ENCODE measurements at regions of chr10 and their contacts with region 1.

Region 1: DNA sequence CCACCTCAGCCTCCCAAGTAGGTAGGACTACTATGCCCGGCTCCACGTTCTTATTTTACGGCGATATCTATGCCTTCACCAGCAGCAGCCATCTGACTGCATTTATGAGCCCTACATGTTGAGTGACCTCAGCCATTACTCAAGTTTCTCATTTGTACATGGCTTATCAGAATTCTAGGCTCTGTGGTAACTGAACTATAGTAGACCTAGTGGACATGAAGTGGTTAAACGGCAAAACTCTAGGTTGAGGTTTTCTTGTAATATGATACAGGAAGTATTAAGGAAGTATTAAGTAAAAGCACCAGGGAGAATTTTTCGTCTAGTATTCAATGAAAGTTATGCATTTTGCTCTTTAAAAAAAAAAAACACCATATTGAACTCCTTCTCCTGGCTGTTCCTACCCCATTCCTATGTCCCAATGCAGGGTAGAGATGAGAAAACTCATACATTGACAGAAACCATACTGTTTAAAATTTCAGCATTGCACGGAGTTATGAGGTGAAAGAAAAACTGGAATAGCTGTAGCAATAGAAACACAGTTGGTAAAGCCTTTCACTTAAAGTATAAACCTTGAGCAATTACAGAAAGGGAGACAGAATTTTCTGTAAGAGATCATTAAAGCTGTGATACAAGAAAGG is 39.8 kb upstream of the EPC1 start:
- DNase-seq: no peak
- ATAC-seq: no peak

Region 2: GRCh38 chr10:32971536-32972091 is 584.9 kb after region 1 on chr10:
- intact Hi-C with region 1: loop called (anchors 10 kb)
- DNase-seq: no peak
- ATAC-seq: peak; percentile 81

Measured in Right ventricle myocardium superior (tissue), 1 donor.